Natural killer cell (primary cell): ENCODE measurements at regions of chr4 and their contacts with region 1.

Region 1: DNA sequence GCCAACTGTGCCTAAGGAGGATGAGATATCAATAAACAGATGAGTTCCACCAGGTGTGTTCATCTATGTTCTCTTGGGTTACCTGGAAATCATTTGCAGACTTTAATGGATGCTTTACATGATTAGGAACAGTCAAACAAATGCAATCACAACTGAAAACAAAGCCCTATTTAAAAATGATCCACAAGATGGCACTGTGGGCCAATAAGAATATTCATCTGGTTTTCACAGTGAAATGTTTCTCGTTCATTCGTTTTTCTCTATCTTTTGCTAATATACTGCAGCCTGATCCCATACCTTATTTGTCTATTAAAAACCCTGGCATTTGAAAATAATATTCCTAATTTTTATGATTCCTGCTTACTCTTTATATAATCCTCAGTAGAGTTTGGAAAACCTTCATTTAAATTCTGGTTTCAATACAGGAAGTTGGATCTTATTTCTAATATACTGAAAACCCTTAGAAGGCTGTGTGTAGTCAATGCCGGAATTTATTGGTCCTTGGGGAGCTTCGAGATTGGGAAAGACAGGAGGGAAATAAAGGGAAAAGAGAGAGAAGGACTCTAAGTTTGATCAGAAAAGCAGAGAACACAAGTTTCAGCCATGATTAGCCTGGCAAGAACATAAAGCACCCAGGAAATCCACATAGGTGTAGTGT is 63.8 kb upstream of the TAPT1 start:
- DNase-seq: peak in 1 of 2 donors; percentile 50
- ATAC-seq: no peak
- H3K4me3 ChIP-seq: no peak overlapping the region
- H3K4me3 Mint-ChIP-seq: no peak overlapping the region
- H3K27ac ChIP-seq: no peak overlapping the region
- H3K27ac Mint-ChIP-seq: no peak overlapping the region
- H3K4me1 ChIP-seq: no peaks in the 10 kb centered on the region
- H3K4me1 Mint-ChIP-seq: peaks cover 5% of the 10 kb centered on the region in 2 donors
- H3K27me3 ChIP-seq: no peaks in the 10 kb centered on the region
- H3K27me3 Mint-ChIP-seq: peaks cover 8 to 12% of the 10 kb centered on the region in 2 donors
- CTCF ChIP-seq: peak; percentile 69

Region 2: DNA sequence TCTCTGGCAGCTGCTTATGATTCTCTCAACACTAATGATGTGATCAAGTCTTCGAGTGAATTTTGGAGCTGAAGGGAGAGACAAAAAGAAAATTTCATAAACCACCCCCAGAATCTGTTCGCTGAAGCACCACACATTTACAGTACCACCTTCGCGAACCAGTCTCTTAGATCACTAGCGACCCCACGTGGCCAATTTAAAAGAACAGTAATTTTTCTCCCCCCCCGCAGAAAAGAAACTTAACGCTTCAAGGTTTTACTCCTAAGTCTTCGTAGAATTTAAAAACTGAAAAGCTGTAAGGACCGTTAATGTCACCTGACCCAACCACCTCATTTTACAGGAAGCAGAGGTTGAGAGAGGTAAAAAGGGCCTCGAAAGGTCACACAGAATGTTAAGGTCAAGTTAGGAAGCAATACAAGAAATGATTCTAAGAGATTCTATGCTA is 1034.4 kb after region 1 on chr4:
- intact Hi-C with region 1: loop called (anchors 5 kb)
- DNase-seq: peak in 1 of 2 donors; percentile 72
- ATAC-seq: no peak
- H3K4me3 ChIP-seq: no peak overlapping the region
- H3K4me3 Mint-ChIP-seq: no peak overlapping the region
- H3K27ac ChIP-seq: no peak overlapping the region
- H3K27ac Mint-ChIP-seq: no peak overlapping the region
- H3K4me1 ChIP-seq: no peaks in the 10 kb centered on the region
- H3K4me1 Mint-ChIP-seq: peaks cover 5 to 7% of the 10 kb centered on the region in 2 donors
- H3K27me3 ChIP-seq: no peaks in the 10 kb centered on the region
- H3K27me3 Mint-ChIP-seq: peaks cover 12 to 20% of the 10 kb centered on the region in 2 donors
- CTCF ChIP-seq: peak; percentile 20

Region 3: DNA sequence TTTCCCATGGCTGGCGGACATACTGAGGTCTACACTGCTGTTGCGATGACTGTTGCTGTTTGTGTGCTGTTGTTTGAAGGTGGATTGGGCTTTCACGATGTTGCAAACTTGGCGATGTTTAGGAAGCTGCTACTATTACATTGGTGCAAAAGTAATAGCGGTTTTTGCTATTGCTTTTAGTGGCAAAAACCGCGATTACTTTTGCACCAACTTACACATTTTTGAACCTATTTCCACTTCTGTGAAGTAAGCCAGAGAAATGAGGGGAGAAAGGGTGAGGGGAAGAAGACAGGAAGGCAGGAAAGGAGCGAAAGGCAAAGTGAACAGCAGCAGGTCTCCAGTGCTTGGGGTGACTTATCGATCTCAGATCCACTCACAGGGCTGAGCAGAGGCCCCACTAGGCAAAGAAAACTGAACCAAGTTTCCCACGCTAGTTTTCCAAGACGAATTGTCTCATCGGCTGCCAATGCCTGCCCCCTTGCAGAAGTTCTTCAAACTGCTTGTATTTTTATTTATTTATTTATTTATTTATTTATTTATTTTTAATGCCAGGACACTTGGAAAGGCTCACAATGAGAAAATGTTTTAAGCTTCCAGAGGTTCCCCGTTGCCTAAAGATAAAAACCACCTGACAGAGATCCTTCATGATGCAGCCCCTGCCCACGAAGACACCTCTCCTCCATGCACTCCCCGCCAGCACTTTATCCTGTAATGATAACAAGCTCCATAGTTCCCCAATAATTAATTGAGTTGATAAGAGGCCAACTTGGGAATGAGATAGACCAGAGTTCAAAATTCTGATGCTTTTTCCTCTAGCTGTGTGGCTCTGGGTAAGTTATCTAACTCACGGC is 1178.6 kb after region 1 on chr4:
- intact Hi-C with region 1: loop called (anchors 1 kb)
- DNase-seq: peak in 1 of 2 donors; percentile 26
- ATAC-seq: no peak
- H3K4me3 ChIP-seq: no peak overlapping the region
- H3K4me3 Mint-ChIP-seq: no peak overlapping the region
- H3K27ac ChIP-seq: no peak overlapping the region
- H3K27ac Mint-ChIP-seq: no peak overlapping the region
- H3K4me1 ChIP-seq: no peaks in the 10 kb centered on the region
- H3K4me1 Mint-ChIP-seq: no peaks in the 10 kb centered on the region
- H3K27me3 ChIP-seq: no peaks in the 10 kb centered on the region
- H3K27me3 Mint-ChIP-seq: no peaks in the 10 kb centered on the region
- CTCF ChIP-seq: no peak